Transverse colon (tissue), 4 donors: ENCODE measurements at regions of chr1 and their contacts with region 1.

Region 1: GRCh38 chr1:99877568-99877967 is 27.4 kb downstream of the AGL start:
- DNase-seq: no peak
- H3K4me3 ChIP-seq: no peak overlapping the region
- H3K27ac ChIP-seq: no peak overlapping the region
- H3K4me1 ChIP-seq: no peaks in the 10 kb centered on the region
- H3K27me3 ChIP-seq: no peaks in the 10 kb centered on the region
- CTCF ChIP-seq: no peak
- EP300 ChIP-seq: no peak
- POLR2A ChIP-seq: no peak

Region 2: GRCh38 chr1:99707535-99708142 is 169.9 kb before region 1 on chr1:
- in situ Hi-C with region 1: no loop called
- intact Hi-C with region 1: no loop called
- DNase-seq: peak; percentile 71
- H3K4me3 ChIP-seq: no peak overlapping the region
- H3K27ac ChIP-seq: no peak overlapping the region
- H3K4me1 ChIP-seq: no peaks in the 10 kb centered on the region
- H3K27me3 ChIP-seq: no peaks in the 10 kb centered on the region
- CTCF ChIP-seq: peak; percentile 74 to 80 (median 77)
- EP300 ChIP-seq: no peak
- POLR2A ChIP-seq: no peak

Region 3: GRCh38 chr1:99906535-99906934 is 29.0 kb after region 1 on chr1:
- in situ Hi-C with region 1: no loop called
- intact Hi-C with region 1: loop called (anchors 2 kb)
- DNase-seq: no peak
- H3K4me3 ChIP-seq: no peak overlapping the region
- H3K27ac ChIP-seq: no peak overlapping the region
- H3K4me1 ChIP-seq: no peaks in the 10 kb centered on the region
- H3K27me3 ChIP-seq: no peaks in the 10 kb centered on the region
- CTCF ChIP-seq: no peak
- EP300 ChIP-seq: no peak
- POLR2A ChIP-seq: no peak

Region 4: DNA sequence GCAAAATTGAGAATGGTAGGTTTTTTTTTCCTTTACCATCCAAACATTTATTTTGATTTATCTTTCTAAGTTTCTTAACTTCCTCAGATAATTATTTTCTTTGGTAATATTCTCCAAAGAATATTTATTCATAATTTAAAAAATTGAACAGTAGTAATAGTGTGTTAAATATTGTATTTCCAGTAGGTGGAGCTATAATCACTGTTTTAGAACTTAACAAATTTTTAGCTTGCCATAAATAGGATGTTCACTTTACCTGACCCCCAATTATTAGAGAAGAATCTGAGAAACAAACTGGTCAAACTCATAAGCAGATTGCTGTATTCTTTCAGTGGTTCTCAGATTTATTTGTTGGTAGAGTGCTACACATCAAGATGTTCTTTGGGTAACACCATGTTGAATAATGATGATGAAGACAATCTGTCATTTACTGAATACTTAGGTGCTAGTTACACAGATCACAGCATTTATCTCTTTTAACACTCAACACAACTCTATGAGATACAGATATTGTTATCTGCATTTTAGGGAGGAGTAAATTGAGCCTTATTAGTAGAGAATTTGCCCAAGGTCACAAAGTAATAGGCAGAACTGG is 578.0 kb after region 1 on chr1:
- in situ Hi-C with region 1: no loop called
- intact Hi-C with region 1: no loop called
- DNase-seq: no peak
- H3K4me3 ChIP-seq: no peak overlapping the region
- H3K27ac ChIP-seq: no peak overlapping the region
- H3K4me1 ChIP-seq: peaks cover 0 to 19% (median 0%) of the 10 kb centered on the region in 4 donors
- H3K27me3 ChIP-seq: no peaks in the 10 kb centered on the region
- CTCF ChIP-seq: peak; percentile 28 to 63 (median 53)
- EP300 ChIP-seq: no peak
- POLR2A ChIP-seq: no peak